Calu3 (cell line): ENCODE measurements at regions of chr3 and their contacts with region 1.

Region 1: DNA sequence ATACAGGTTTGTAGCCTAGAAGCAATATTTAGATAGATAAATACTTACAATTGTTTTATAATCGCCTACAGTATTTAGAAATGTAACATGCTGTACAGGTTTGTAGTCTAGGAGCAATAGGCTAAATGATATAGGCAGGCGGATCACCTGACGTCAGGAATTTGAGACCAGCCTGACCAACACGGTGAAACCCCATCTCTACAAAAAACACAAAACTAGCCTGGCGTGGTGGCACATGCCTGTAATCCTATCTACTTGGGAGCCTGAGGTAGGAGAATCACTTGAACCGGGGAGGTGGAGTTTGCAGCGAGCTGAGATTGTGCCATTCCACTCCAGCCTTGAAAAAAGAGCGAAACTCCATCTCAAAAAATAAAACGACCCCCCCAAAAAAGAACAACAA is 375.2 kb upstream of the EPHA3 start:
- DNase-seq: no peak
- H3K4me3 Mint-ChIP-seq: no peak overlapping the region
- H3K27ac Mint-ChIP-seq: no peak overlapping the region
- H3K4me1 Mint-ChIP-seq: peaks cover 10% of the 10 kb centered on the region
- H3K27me3 Mint-ChIP-seq: no peaks in the 10 kb centered on the region
- CTCF ChIP-seq: no peak

Region 2: DNA sequence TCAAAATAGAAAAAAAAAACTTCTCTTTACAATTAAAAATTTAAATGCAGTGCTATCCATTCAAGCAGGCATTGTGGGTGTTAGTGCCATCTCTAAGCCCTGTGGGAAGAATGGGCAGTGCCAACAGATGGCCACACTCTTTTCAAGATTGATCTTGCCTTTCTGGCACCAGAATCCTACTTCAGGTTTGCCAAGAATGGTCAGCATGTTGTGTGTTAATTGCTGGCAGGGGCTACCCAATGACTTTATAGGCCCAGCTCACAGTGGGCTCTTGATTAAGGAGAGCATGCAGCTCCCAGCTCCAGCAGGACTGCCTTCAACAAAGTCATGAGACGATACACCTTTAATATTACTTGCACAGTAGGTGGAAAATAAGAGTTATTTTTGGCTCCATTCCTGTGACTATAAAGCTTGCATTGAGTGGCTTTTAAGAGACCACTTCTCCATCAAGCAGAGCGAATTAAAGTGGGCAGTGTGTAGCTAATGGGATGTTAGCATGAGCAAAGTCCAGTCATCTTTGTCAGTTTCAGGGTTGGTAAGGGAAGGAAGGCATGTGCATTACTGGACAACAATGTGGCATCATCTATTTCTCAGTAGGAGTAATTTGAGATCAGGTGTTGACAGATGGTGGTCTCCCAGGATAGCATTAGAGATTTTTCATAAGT is 105.6 kb before region 1 on chr3:
- CTCF ChIA-PET with region 1: no interaction called
- intact Hi-C with region 1: no loop called
- DNase-seq: no peak
- H3K4me3 Mint-ChIP-seq: no peak overlapping the region
- H3K27ac Mint-ChIP-seq: no peak overlapping the region
- H3K4me1 Mint-ChIP-seq: no peaks in the 10 kb centered on the region
- H3K27me3 Mint-ChIP-seq: no peaks in the 10 kb centered on the region
- CTCF ChIP-seq: no peak

Region 3: DNA sequence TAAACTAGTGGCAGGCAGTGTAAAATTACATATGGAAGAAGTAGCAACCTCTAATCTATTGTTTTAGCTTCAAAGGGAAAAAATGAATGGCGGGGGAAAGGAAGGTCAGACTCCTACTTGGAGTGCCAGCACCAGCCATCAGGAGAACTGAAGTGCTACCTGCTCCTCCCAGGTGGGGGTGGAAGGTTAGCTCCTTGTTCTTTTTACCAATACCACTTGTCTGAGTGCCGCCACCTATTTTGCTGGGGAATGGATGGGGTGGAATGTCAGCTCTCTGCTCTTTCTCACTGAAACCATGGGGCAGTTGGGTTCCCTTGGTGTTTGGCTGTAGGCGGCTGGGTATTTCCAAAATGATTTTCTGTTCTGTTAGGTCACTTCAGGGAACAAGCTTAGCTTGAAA is 53.4 kb before region 1 on chr3:
- CTCF ChIA-PET with region 1: no interaction called
- intact Hi-C with region 1: loop called (anchors 10 kb)
- DNase-seq: no peak
- H3K4me3 Mint-ChIP-seq: no peak overlapping the region
- H3K27ac Mint-ChIP-seq: no peak overlapping the region
- H3K4me1 Mint-ChIP-seq: no peaks in the 10 kb centered on the region
- H3K27me3 Mint-ChIP-seq: no peaks in the 10 kb centered on the region
- CTCF ChIP-seq: no peak